ENCODE measurements at regions of chr6 and their contacts with region 1.

Region 1: GRCh38 chr6:89122625-89123024 is 4.8 kb upstream of the SRSF12 start:
- DNase-seq: peak in 4 of 9 donors; percentile 8 to 36 (median 26)
- ATAC-seq: peak; percentile 58
- H3K4me3 ChIP-seq: no peak overlapping the region
- H3K4me3 Mint-ChIP-seq: no peak overlapping the region
- H3K27ac ChIP-seq: no peak overlapping the region
- H3K27ac Mint-ChIP-seq: no peak overlapping the region
- H3K4me1 ChIP-seq: no peaks in the 10 kb centered on the region
- H3K4me1 Mint-ChIP-seq: peaks cover 0 to 6% (median 3%) of the 10 kb centered on the region in 7 donors
- H3K27me3 ChIP-seq: no peaks in the 10 kb centered on the region
- H3K27me3 Mint-ChIP-seq: peaks cover 0 to 31% (median 0%) of the 10 kb centered on the region in 5 donors

Region 2: DNA sequence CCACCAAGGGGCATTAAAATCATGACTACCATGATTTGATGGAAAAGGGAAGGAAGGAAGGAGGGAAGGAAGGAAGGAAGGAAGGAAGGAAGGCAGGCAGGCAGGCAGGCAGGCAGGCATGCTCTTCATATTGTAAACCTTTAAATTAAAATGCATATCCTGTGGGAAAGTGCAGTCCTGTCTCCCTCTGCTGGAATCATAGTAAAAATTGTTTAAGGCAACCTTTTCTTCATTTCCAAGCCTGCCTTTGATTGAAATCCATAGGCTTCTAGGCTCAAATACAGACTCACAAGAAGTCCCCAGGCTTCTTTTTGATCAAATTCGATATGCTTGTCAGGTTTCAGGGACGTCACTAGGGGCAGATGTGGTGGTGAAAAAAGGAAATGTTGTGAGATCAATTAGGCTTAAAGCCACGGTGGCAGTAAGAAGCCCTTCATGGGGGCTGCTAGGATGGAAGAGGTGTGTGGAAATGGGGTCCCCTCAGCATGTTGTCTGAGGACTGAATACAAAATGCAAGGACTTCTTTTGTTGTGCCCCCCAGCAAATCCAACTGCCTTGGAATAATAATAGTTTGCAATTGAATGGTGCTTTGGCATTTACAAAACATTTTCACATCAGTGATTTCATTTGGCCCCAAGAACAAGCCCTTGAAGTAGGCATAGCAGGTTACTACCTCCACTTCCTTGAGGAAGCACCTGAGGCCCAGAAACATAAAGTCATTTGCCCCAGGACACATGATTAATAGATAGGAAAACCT is 120.1 kb after region 1 on chr6:
- CTCF ChIA-PET with region 1: interaction called, 3 read pairs
- POLR2A ChIA-PET with region 1: no interaction called
- intact Hi-C with region 1: loop called (anchors 1 to 5 kb)
- DNase-seq: peak in 4 of 9 donors; percentile 15 to 35 (median 33)
- ATAC-seq: peak; percentile 48
- H3K4me3 ChIP-seq: no peak overlapping the region
- H3K4me3 Mint-ChIP-seq: no peak overlapping the region
- H3K27ac ChIP-seq: no peak overlapping the region
- H3K27ac Mint-ChIP-seq: no peak overlapping the region
- H3K4me1 ChIP-seq: peaks cover 6 to 8% of the 10 kb centered on the region in 2 donors
- H3K4me1 Mint-ChIP-seq: peaks cover 13 to 29% (median 19%) of the 10 kb centered on the region in 7 donors
- H3K27me3 ChIP-seq: no peaks in the 10 kb centered on the region
- H3K27me3 Mint-ChIP-seq: peaks cover 0 to 34% (median 8%) of the 10 kb centered on the region in 5 donors

Region 3: DNA sequence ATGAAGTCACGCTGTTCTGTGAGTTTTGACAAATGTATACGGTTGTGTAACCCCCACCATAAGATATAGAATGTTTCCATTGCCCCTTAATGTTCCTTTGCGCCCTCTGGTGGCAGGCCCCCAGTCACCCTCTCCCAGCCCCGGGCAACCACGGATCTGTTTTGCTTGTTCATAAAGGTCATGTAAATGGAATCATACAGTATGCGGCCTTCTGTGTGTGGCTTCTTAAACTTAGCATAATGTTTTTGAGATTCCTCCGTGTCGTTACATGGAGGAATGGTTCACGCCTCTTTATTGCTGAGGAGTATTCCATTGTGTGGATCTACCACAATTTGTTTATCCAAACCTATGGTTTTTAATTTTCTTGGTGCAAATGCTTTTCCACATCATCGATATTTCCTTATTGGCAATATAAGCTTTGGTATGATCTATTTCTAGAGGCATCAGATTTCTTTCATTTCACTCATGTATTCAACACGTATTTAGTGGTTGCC is 487.6 kb after region 1 on chr6:
- CTCF ChIA-PET with region 1: no interaction called
- POLR2A ChIA-PET with region 1: no interaction called
- intact Hi-C with region 1: loop called in 1 of 2 experiments (anchors 2 kb)
- DNase-seq: peak; percentile 34 to 75 (median 65)
- ATAC-seq: peak; percentile 91
- H3K4me3 ChIP-seq: no peak overlapping the region
- H3K4me3 Mint-ChIP-seq: no peak overlapping the region
- H3K27ac ChIP-seq: no peak overlapping the region
- H3K27ac Mint-ChIP-seq: no peak overlapping the region
- H3K4me1 ChIP-seq: no peaks in the 10 kb centered on the region
- H3K4me1 Mint-ChIP-seq: peaks cover 0 to 17% (median 0%) of the 10 kb centered on the region in 7 donors
- H3K27me3 ChIP-seq: no peaks in the 10 kb centered on the region
- H3K27me3 Mint-ChIP-seq: no peaks in the 10 kb centered on the region